ENCODE measurements at regions of chr15 and their contacts with region 1.

Region 1: DNA sequence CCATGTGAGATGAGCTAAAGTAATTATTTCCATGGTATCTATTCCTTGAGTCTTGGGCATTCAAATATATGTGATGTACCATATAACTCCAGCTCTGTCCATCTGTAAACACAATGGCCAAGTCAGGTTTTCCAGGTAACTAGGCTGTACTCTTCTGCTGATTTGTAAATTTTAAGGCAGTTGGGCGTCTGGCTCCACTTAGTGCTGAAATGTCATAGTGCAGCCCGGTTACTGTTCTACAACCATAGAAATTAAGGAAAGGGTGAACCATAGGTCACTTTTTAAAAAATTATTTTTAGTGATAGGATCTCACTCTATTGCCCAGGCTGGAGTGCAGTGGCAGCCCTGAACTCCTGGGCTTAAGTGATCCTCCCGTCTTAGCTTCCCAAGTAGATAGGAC is 44.7 kb upstream of the GOLM2 start:
- DNase-seq: no peak
- H3K4me3 ChIP-seq: no peak overlapping the region
- H3K27ac ChIP-seq: no peak overlapping the region
- H3K4me1 ChIP-seq: no peaks in the 10 kb centered on the region
- H3K27me3 ChIP-seq: no peaks in the 10 kb centered on the region
- CTCF ChIP-seq: no peak
- POLR2A ChIP-seq: no peak

Region 2: DNA sequence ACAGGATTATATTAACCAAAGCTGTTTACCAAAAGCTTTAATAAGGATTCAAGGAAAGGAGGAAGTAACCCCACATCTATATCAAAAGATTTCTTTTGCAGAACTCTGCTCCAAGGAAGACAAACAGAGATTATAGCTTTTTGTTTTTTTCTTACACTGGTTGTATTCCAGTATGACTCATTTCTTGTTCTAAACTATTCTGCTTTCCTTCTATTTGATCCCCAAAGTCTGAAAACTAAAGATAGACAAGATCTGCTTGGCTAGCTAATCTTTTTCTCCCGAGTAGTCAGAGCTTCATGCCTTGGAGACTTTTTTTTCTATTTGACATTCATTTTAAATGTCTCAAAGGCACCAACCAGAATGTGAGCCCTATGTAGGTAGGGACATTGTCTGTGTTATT is 12.0 kb before region 1 on chr15:
- CTCF ChIA-PET with region 1: interaction called, 11 read pairs
- POLR2A ChIA-PET with region 1: no interaction called
- dilution Hi-C with region 1: no loop called
- intact Hi-C with region 1: no loop called
- DNase-seq: peak; percentile 63
- H3K4me3 ChIP-seq: no peak overlapping the region
- H3K27ac ChIP-seq: no peak overlapping the region
- H3K4me1 ChIP-seq: peaks cover 4% of the 10 kb centered on the region
- H3K27me3 ChIP-seq: peaks cover 2 to 3% of the 10 kb centered on the region in 2 experiments
- CTCF ChIP-seq: no peak
- POLR2A ChIP-seq: no peak

Region 3: DNA sequence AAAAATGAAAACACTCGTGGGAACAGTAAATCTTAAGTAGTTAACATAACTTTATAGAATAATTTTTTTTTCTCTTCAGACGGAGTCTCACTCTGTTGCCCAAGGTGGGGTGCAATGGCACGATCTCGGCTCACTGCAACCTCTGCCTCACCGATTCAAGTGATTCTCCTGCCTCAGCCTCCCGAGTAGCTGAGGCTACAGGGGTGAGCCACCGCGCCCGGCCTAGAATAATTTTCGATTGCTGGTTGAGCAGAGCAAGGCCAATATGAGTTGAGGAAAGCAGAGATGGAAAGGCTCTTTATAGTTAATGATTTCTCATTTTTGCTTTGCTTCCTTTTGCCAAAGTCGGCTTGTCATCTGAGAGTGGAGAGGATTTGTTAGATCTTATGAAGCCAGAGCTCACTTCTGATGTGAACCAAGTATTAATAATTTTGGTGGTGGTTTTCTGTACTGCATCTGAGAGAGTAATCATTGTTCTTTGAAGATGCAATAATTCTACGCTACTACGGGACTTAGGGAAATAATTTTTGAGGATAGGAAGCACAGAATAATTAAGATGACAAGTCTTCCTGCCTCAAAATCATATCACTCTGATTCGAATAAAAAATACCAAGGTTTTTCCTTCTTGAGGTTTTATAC is 43.1 kb after region 1 on chr15:
- CTCF ChIA-PET with region 1: no interaction called
- POLR2A ChIA-PET with region 1: no interaction called
- dilution Hi-C with region 1: no loop called
- intact Hi-C with region 1: no loop called
- DNase-seq: peak; percentile 24
- H3K4me3 ChIP-seq: peak overlapping the region; percentile 81 to 97 (median 82)
- H3K27ac ChIP-seq: no peak overlapping the region
- H3K4me1 ChIP-seq: peaks cover 19% of the 10 kb centered on the region
- H3K27me3 ChIP-seq: no peaks in the 10 kb centered on the region
- CTCF ChIP-seq: no peak
- POLR2A ChIP-seq: no peak

Region 4: DNA sequence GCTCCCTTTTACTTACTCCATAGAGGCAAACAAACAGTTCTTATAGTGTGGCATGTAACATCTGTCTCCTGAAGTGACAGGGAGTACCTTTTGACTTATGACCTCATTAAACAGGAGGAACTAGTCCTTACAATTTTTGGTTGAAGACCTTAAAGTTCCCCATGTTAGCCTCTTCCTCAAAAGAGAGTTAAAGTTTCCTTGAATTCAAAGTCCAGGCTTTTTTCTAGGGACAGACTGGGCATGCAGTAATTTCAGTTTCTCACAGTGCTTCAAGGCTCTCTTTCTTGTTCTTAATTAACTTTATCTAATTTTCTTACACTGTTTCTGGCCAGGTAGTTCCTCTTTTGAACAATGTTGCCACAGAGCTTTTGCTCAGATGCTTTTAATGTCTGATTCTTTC is 56.7 kb after region 1 on chr15:
- CTCF ChIA-PET with region 1: interaction called, 3 read pairs
- POLR2A ChIA-PET with region 1: interaction called, 11 read pairs
- dilution Hi-C with region 1: no loop called
- intact Hi-C with region 1: no loop called
- DNase-seq: no peak
- H3K4me3 ChIP-seq: no peak overlapping the region
- H3K27ac ChIP-seq: no peak overlapping the region
- H3K4me1 ChIP-seq: peaks cover 5% of the 10 kb centered on the region
- H3K27me3 ChIP-seq: no peaks in the 10 kb centered on the region
- CTCF ChIP-seq: no peak
- POLR2A ChIP-seq: no peak

Measured in endothelial cell of umbilical vein (primary cell).